GM12878 (cell line): ENCODE measurements at regions of chr17 and their contacts with region 1.

Region 1: DNA sequence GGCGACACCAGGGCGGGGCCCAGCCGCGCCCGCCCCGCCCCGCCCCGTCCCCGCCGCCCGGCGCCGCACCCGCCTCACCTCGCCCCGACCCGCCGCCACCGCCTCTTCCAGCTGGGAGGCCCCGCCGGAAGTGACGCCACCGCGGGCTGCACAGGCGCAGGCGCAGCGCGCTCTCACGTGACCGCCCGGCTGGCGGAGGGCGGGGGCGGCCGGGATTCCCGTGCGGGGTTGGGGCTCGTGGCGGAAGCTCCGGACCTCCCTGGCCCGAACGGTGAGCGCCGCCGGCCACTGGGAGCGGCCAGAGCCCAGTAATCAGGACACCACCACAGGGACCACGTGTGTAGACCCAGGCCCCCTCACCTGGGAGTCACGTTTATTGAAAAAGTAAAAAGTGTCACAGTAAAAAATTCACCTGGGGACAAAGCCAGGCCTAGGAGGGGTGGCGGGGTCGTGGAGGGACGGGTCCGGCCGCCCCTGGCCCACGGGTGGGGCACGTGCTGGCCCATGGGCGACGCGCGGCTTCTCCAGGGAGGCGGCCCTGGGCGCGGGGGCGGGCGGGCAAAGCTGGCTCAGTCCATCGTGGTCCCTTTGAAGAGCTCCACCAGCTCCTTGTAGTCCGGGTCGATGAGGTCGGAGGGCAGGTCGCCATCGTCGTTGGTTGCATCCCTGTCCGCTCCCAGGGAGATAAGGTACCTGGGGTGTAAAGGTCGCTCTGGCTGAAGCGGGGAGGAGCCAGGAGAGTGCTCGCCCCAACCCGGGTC is at the start of gene MCRIP1:
- DNase-seq: peak; percentile 72
- ATAC-seq: peak; percentile 80
- H3K4me3 ChIP-seq: peak within 1 kb of the TSS; percentile 96
- H3K27ac ChIP-seq: peak within 1 kb of the TSS; percentile 85
- H3K4me1 ChIP-seq: peaks cover 16% of the 10 kb centered on the region
- H3K27me3 ChIP-seq: no peaks in the 10 kb centered on the region
- CTCF ChIP-seq: no peak
- EP300 ChIP-seq: no peak
- POLR2A ChIP-seq: peak; percentile 93
- RAD21 ChIP-seq: no peak
- polyA plus RNA-seq, gene MCRIP1: 0.31 to 3.8 TPM

Region 2: DNA sequence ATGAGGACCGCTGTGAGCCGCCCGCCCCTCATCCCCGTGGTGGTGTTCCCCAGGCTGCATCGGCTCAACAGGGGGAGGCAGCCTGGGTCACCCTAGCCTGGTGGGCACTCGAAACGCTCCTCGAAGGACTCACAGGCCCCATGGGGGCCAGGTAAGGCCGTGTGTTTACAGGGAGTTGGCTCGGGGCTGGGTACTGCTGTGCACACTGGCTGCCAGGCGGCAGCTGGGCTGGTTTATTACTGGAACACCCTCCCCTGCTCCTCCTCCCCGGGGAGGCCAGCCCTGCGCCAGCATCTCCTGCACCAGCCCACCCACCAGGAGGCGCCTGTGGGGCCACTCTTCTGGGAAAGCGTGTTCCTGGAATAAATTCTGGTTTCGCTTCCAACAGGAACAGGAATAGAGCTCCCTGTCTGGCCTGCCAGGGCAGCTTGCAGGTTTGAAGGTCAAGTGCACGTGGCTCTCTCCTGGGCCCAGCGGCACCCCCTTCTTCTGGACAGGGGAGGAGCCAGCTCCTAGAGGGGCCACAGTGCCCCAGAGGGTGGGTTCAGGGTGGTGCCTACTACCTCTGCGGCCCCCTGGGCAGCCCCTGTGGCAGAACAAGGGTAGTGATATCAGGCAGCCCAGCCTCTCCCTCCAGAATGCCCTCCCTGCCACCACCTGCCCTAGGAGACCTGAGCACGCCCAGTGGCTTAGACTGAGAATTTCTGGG is 11.6 kb before region 1 on chr17:
- CTCF ChIA-PET with region 1: no interaction called
- POLR2A ChIA-PET with region 1: no interaction called
- RAD21 ChIA-PET with region 1: no interaction called
- SMC1A ChIA-PET with region 1: no interaction called
- in situ Hi-C with region 1: no loop called
- intact Hi-C with region 1: no loop called
- DNase-seq: no peak
- ATAC-seq: peak; percentile 48; the same call in 2 of the 3 replicates
- H3K4me3 ChIP-seq: no peak overlapping the region
- H3K27ac ChIP-seq: no peak overlapping the region
- H3K4me1 ChIP-seq: no peaks in the 10 kb centered on the region
- H3K27me3 ChIP-seq: no peaks in the 10 kb centered on the region
- CTCF ChIP-seq: 0 out of 6 replicates have a peak, but pooled peaks of 2 of the 3 experiments have one; percentile 12 to 20
- EP300 ChIP-seq: no peak
- POLR2A ChIP-seq: 0 out of 2 replicates have a peak, but pooled peaks have one; percentile 5
- RAD21 ChIP-seq: no peak

Region 3: GRCh38 chr17:81860756-81861518 is 27.6 kb after region 1 on chr17:
- CTCF ChIA-PET with region 1: interaction called, 3 read pairs
- POLR2A ChIA-PET with region 1: interaction called, 15 read pairs
- RAD21 ChIA-PET with region 1: interaction called, 3 read pairs
- SMC1A ChIA-PET with region 1: interaction called, 6 read pairs
- in situ Hi-C with region 1: no loop called
- intact Hi-C with region 1: no loop called
- DNase-seq: peak; percentile 100
- ATAC-seq: peak; percentile 89
- H3K4me3 ChIP-seq: peak overlapping the region; percentile 94
- H3K27ac ChIP-seq: peak overlapping the region; percentile 98
- H3K4me1 ChIP-seq: peaks cover 23% of the 10 kb centered on the region
- H3K27me3 ChIP-seq: no peaks in the 10 kb centered on the region
- CTCF ChIP-seq: no peak
- EP300 ChIP-seq: 0 out of 4 replicates have a peak, but pooled peaks of 1 of the 2 experiments have one; percentile 42
- POLR2A ChIP-seq: peak; percentile 96
- RAD21 ChIP-seq: no peak